Heart left ventricle (tissue), 16 donors: ENCODE measurements at regions of chr1 and their contacts with region 1.

Region 1: DNA sequence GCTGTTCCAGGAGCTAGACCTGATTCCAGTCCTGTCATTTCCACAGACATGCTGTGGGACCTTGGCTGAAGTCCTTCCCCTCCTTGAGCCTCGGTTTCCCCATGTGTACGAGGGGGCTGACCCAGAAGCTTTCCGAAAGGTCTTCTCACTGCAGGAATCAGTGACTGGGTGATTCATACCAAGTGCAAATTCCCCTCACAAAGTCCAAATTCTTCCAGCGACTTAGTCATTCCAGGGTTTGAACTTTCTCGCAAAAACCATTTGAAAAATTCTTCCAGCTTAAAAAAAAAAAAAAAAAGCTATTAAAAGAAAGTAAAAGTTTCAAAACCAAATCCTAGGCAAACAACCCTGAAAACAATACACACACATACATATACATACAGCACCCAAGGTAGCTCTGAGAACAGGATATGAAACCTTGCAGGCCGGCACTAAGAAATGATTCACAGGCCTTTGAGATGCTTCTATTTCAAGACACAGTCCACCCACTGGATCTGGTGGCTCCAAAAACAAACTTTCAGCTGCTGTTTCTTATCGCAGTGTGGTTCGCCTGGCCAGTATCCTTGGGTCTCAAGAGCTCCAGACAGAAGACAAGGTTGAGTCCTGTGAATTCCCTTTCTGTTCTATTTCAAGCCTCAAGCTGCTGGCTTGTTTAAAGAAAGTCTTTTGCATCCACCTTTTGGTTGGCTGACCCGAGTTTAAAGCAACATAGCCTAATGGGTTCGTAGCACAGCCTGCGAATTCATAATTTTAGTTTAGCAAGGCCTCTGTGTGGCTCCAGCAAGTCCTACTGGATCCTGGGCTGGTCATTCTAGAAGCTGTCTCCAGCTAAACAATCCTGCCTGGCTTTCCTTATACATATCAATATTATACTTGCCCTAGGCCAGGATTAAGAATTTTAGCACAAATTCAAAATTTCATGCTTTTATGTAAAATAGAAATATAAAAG is 18.0 kb upstream of the ID3 start:
- DNase-seq: peak in 4 of 5 donors; percentile 56 to 71 (median 66)
- ATAC-seq: peak; percentile 52 to 86 (median 82)
- H3K4me3 ChIP-seq: peak overlapping the region in 8 of 12 donors; percentile 5 to 43 (median 26)
- H3K27ac ChIP-seq: peak overlapping the region; percentile 40 to 87 (median 79)
- H3K4me1 ChIP-seq: peaks cover 0 to 53% (median 34%) of the 10 kb centered on the region in 12 donors
- H3K27me3 ChIP-seq: no peaks in the 10 kb centered on the region
- CTCF ChIP-seq: no peak
- POLR2A ChIP-seq: no peak

Region 2: GRCh38 chr1:23559136-23559984 is 18.0 kb before region 1 on chr1 and contains the start of gene ID3:
- intact Hi-C with region 1: loop called in 1 of 10 experiments (anchors 1 kb)
- DNase-seq: peak; percentile 97 to 99 (median 98)
- ATAC-seq: peak; percentile 75 to 86 (median 79)
- H3K4me3 ChIP-seq: peak within 1 kb of the TSS; percentile 60 to 92 (median 79)
- H3K27ac ChIP-seq: peak within 1 kb of the TSS; percentile 83 to 97 (median 94)
- H3K4me1 ChIP-seq: peaks cover 4 to 83% (median 59%) of the 10 kb centered on the region in 12 donors
- H3K27me3 ChIP-seq: no peaks in the 10 kb centered on the region
- CTCF ChIP-seq: no peak
- POLR2A ChIP-seq: peak; percentile 88 to 99
- total RNA-seq, gene ID3: 57.5 to 185 (median 91.0) TPM

Region 3: DNA sequence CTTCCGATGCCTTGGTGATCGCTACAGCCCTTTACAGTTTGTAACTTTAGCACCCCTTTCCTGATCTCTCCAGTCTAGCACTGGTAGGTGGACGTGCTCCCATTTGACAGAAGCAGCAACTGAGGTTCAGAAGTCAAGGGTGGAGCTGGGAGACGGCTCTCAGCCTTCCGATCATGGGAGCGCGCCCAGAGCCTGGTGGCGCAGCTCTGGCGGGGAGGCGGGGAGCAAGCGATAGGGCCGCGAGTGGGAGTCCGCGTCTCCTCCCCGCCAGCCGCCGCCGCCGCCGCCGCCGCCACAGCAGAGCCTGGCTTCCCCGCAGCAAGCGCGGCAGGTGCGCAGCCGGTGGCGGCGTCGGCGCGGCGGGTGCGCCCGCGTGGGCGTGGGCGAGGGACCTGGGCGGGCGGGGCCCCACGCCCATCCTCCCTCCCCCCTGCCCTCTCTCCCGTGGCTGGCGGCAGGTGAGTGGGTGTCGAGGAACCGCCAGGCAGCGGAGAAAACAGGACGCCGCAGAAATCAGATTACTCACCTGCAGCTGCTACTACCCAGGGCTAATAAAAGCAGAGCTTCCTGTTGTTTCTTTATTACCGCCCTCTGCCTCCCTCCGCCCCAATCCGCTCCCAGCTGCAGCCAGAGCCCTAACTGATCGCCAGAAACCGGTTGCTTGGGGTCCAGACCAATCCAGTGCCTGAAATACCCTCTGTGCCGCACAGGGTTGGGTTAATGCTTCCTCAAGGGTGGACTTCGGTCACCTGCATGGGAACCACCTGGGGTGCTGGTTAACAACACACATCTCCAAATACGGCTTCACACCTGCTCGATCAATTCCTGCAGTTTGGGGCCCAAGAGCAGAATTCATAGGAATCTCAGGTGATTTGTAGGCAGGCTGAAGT is 42.2 kb after region 1 on chr1:
- intact Hi-C with region 1: loop called in 1 of 10 experiments (anchors 5 kb)
- DNase-seq: peak in 1 of 5 donors; percentile 29
- ATAC-seq: peak in 3 of 4 donors; percentile 25 to 62 (median 55)
- H3K4me3 ChIP-seq: peak overlapping the region in 11 of 12 donors; percentile 8 to 52 (median 44)
- H3K27ac ChIP-seq: peak overlapping the region in 1 of 12 donors; percentile 58
- H3K4me1 ChIP-seq: peaks cover 0 to 9% (median 0%) of the 10 kb centered on the region in 12 donors
- H3K27me3 ChIP-seq: peaks cover 0 to 12% (median 3%) of the 10 kb centered on the region in 9 donors
- CTCF ChIP-seq: no peak
- POLR2A ChIP-seq: no peak